Heart right ventricle (tissue), 16 donors: ENCODE measurements at regions of chr12 and their contacts with region 1.

Region 1: GRCh38 chr12:112148031-112148513 is 22.7 kb downstream of the TRAFD1 start:
- DNase-seq: no peak
- ATAC-seq: no peak
- H3K4me3 ChIP-seq: no peak overlapping the region
- H3K27ac ChIP-seq: no peak overlapping the region
- H3K4me1 ChIP-seq: peaks cover 0 to 4% (median 0%) of the 10 kb centered on the region in 9 donors
- H3K27me3 ChIP-seq: no peaks in the 10 kb centered on the region
- CTCF ChIP-seq: no peak

Region 2: GRCh38 chr12:112066566-112066965 is 81.5 kb before region 1 on chr12:
- intact Hi-C with region 1: loop called in 1 of 10 experiments (anchors 10 kb)
- DNase-seq: no peak
- ATAC-seq: no peak
- H3K4me3 ChIP-seq: no peak overlapping the region
- H3K27ac ChIP-seq: peak overlapping the region in 1 of 10 donors; percentile 13
- H3K4me1 ChIP-seq: peaks cover 0 to 11% (median 0%) of the 10 kb centered on the region in 9 donors
- H3K27me3 ChIP-seq: no peaks in the 10 kb centered on the region
- CTCF ChIP-seq: no peak

Region 3: GRCh38 chr12:112239881-112240280 is 91.8 kb after region 1 on chr12:
- intact Hi-C with region 1: loop called in 1 of 10 experiments (anchors 10 kb)
- DNase-seq: no peak
- ATAC-seq: no peak
- H3K4me3 ChIP-seq: no peak overlapping the region
- H3K27ac ChIP-seq: no peak overlapping the region
- H3K4me1 ChIP-seq: no peaks in the 10 kb centered on the region
- H3K27me3 ChIP-seq: no peaks in the 10 kb centered on the region
- CTCF ChIP-seq: no peak